PC-9 (cell line): ENCODE measurements at regions of chr5 and their contacts with region 1.

Region 1: DNA sequence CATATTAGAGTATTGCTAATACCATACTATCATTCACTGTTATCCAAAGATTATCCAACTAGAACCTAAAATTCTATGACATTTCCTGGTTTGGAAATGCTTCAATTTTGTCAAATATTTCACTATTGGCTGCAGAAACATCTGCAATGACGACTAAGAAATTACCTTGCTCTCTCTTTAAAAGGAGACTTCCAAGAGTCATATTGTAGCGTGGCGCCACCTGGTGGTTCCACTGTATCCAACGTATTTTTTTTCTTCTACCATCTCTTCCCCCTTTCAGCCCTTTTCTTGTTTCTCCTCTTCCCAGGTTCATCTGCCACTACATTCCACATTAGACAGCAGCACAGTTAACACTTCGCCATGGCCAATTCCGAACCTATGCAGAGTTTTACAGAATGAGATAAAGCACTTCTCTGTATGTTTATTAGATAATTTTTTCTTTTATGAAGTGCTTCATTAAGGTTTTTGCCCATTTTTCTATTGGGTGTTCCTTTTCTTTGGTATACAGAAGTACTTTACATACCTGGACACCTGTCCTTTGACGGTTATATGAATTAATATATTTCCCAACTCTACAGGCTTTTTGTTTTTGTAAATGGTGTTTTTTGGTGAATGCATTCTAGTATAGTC is 153.5 kb downstream of the CDC42SE2 start:
- DNase-seq: peak; percentile 37 to 55
- H3K4me3 ChIP-seq: no peak overlapping the region
- H3K27ac ChIP-seq: no peak overlapping the region
- H3K4me1 ChIP-seq: no peaks in the 10 kb centered on the region
- H3K27me3 ChIP-seq: no peaks in the 10 kb centered on the region
- CTCF ChIP-seq: peak; percentile 94

Region 2: DNA sequence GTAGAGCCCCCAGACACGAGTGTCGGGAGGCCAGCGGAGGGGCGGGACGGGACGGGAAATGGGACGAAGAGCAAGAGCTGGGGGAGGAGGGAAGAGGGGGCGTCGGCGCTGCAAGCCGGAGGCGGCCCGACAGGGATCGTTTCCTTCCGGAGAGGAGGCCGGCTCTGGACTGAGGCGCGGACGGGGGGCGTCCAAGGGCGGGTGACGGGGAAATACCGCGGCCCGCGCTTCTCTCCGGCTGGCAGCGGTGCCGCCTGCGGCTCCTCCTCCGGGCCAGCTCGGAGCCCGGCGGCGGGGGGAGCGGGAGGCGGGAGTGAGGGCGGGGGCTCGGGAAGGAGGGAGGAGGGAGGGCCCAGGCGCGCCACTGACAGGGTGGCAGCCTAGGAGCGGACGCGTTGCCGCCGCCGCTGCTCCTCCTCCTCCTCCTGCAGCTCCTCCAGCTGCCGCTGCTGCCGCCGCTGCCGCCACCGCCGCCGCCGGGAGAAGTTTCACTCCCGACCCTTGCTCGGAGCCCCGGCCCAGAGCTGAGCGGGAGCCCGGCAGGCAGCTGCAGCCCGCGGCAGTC is 1513.2 kb before region 1 on chr5 and contains the start of gene CHSY3:
- CTCF ChIA-PET with region 1: no interaction called
- POLR2A ChIA-PET with region 1: no interaction called
- intact Hi-C with region 1: loop called (anchors 1 kb)
- DNase-seq: peak; percentile 52 to 82
- H3K4me3 ChIP-seq: peak within 1 kb of the TSS; percentile 68
- H3K27ac ChIP-seq: no peak within 1 kb of the TSS
- H3K4me1 ChIP-seq: no peaks in the 10 kb centered on the region
- H3K27me3 ChIP-seq: peaks cover 26% of the 10 kb centered on the region
- CTCF ChIP-seq: no peak
- total RNA-seq, gene CHSY3: 0.17 and 0.33 TPM in 2 replicates

Region 3: DNA sequence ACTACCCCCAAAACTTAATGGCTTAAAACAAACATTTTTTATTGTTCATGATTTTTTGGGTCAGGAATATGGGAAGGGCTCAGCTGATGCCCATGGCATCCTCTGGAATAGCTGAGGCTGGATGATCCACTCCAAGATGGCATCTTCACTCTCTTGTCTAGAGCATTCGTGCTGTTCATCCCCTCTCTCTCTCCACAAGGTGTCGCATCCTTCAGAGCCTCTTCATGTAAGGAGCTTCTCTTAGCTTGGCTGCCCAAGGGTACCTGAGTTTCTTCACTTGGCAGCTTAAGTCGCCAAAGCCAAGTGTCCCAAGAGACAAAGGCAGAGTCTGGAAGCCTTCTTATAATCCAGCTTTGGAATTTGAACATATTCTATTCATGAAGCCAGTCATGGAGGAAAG is 1218.4 kb before region 1 on chr5:
- CTCF ChIA-PET with region 1: no interaction called
- POLR2A ChIA-PET with region 1: no interaction called
- intact Hi-C with region 1: loop called (anchors 2 kb)
- DNase-seq: no peak
- H3K4me3 ChIP-seq: no peak overlapping the region
- H3K27ac ChIP-seq: no peak overlapping the region
- H3K4me1 ChIP-seq: no peaks in the 10 kb centered on the region
- H3K27me3 ChIP-seq: no peaks in the 10 kb centered on the region
- CTCF ChIP-seq: peak; percentile 22; the same call in 1 of the 2 replicates

Region 4: DNA sequence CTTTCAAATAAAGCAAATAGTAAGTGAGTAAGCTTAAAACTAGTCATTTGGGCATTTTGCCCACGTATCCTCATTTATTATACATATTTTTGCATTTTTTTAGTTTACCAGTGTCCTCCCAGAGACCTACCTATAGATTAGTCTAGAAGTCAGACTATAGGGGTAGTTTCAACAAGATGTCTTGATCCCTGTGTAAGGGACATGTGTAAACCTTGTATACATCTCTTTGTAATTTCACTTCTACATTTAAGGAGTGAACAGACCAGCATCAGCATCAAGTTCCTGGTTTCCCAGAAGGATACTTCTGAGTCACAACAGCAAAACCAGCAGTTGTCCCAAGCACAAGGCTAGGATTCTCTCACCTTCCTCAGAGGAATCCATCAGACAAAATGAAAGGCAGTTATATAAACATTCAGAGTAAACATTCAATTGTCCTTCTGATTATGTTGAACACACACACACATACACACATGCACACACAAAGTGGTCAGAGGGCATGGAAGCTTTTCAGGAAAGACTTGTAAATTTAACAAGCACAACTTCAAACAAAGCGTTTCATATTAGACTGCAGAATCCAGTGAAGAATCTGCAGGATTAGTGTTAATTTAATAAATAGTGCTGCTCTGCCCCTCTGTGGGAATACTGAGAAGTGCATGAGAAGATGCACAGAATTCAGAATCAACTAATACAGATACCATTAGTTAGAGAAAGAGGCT is 307.7 kb before region 1 on chr5:
- CTCF ChIA-PET with region 1: no interaction called
- POLR2A ChIA-PET with region 1: no interaction called
- intact Hi-C with region 1: loop called (anchors 1 kb)
- DNase-seq: peak in 1 of 2 experiments; percentile 11
- H3K4me3 ChIP-seq: no peak overlapping the region
- H3K27ac ChIP-seq: no peak overlapping the region
- H3K4me1 ChIP-seq: no peaks in the 10 kb centered on the region
- H3K27me3 ChIP-seq: no peaks in the 10 kb centered on the region
- CTCF ChIP-seq: peak; percentile 86

Region 5: GRCh38 chr5:131165119-131165727 is 252.1 kb before region 1 on chr5 and contains the start of gene HINT1:
- CTCF ChIA-PET with region 1: no interaction called
- POLR2A ChIA-PET with region 1: no interaction called
- intact Hi-C with region 1: loop called (anchors 10 kb)
- DNase-seq: peak; percentile 81 to 96
- H3K4me3 ChIP-seq: peak within 1 kb of the TSS; percentile 93
- H3K27ac ChIP-seq: peak within 1 kb of the TSS; percentile 82
- H3K4me1 ChIP-seq: peaks cover 23% of the 10 kb centered on the region
- H3K27me3 ChIP-seq: no peaks in the 10 kb centered on the region
- CTCF ChIP-seq: no peak; the same call in 1 of the 2 replicates
- total RNA-seq, gene HINT1: 210 and 262 TPM in 2 replicates

Region 6: DNA sequence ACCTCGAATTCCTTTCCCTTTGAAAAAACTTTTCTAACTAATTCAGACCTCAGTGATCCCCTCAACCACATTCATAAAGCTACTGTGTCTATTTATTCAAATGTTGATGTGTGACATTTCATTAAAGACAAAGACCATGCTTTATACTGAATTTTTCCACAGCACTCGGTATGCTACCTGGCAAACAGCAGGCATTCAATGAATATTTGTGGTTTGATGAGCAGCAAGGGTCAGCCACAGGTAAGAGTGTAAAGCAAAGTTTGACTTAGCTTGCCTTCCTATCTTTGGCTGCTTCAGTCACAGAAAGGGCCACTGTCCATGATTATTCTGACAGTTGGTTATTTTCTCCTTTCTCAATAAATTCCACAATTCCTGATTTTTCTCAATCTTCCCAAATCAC is 158.6 kb before region 1 on chr5:
- CTCF ChIA-PET with region 1: interaction called, 11 read pairs
- POLR2A ChIA-PET with region 1: no interaction called
- intact Hi-C with region 1: no loop called
- DNase-seq: peak; percentile 53 to 84
- H3K4me3 ChIP-seq: no peak overlapping the region
- H3K27ac ChIP-seq: peak overlapping the region; percentile 60
- H3K4me1 ChIP-seq: peaks cover 37% of the 10 kb centered on the region
- H3K27me3 ChIP-seq: no peaks in the 10 kb centered on the region
- CTCF ChIP-seq: no peak

Region 7: DNA sequence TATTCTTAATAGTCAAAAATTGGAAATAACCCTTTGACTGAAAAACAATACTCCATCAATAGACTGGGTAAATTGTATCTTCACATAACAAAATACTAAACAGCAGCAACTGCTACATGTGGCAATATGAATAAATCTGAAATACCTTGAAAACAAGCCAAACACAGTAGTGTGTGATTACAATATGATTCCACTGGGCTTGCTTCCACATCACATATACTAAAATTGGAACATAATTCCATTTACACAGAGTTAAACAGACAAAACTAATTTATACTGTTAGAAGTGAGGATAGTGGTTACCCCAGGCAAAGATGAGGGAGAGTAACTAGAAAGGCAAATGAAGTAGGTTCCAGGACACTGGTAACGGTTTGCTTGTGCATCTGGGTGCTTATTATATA is 359.1 kb after region 1 on chr5:
- CTCF ChIA-PET with region 1: interaction called, 10 read pairs
- POLR2A ChIA-PET with region 1: no interaction called
- intact Hi-C with region 1: no loop called
- DNase-seq: no peak
- H3K4me3 ChIP-seq: no peak overlapping the region
- H3K27ac ChIP-seq: no peak overlapping the region
- H3K4me1 ChIP-seq: no peaks in the 10 kb centered on the region
- H3K27me3 ChIP-seq: no peaks in the 10 kb centered on the region
- CTCF ChIP-seq: no peak